OCI-LY7 (cell line): ENCODE measurements at regions of chrX and their contacts with region 1.

Region 1: GRCh38 chrX:129982274-129983251 is at the start of gene BCORL1:
- DNase-seq: peak; percentile 88
- H3K4me3 ChIP-seq: no peak within 1 kb of the TSS
- H3K27ac ChIP-seq: no peak within 1 kb of the TSS
- H3K4me1 ChIP-seq: peaks cover 13% of the 10 kb centered on the region
- CTCF ChIP-seq: no peak
- total RNA-seq, gene BCORL1: 1.6 and 1.7 TPM in 2 replicates

Region 2: DNA sequence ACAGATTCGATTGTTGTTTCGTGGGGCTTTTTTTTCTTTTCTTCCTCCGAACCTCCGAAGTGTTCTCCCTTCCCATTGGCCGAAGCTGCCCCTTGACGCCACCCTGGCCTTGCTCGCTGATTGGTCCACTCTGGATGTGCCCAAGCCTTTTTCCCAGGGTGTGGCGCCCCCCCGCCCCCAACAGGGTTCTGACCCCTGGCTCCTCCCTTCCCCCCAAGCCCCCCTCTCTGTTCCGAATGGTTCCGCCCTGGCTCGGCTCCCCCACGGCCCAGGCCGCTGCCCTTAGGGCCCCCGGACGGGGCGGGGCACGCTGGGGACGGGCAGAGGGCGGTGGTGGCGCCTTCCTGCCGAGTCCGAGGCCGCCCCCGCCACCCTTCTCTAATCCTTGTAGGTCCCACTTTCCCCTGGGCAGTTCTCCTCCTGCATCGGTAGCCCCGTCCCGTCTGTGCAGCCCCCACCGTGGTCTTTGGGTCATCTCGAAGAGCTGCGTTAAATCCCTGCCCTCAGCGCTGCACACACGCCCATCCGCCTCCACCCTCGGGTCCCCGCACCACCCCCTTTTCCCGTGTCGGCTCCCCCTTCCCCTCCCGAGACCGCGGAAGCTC is 51.0 kb before region 1 on chrX:
- CTCF ChIA-PET with region 1: no interaction called
- POLR2A ChIA-PET with region 1: no interaction called
- intact Hi-C with region 1: loop called (anchors 2 kb)
- DNase-seq: peak; percentile 81
- H3K4me3 ChIP-seq: peak overlapping the region; percentile 73
- H3K27ac ChIP-seq: peak overlapping the region; percentile 26
- H3K4me1 ChIP-seq: peaks cover 5% of the 10 kb centered on the region
- CTCF ChIP-seq: no peak

Region 3: DNA sequence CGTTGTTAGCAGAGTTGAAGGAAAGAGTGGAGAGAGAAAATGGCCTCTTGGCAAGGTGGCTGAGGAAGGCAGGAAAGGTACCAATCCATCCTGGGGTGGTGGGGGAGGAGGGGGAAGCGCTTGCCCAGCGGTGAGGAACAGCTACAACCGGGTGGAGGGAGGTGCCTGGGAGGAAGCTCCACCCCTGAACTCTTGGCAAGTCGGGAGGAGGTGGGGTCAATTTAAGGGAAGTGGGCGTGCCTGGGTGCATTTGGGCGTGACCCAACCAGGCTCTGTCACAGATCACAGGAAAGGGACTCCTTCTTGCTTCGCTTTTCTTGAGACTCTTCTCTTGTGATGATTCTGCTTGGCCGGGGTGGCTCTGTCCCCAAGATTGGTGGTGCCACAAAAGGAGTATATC is 41.6 kb after region 1 on chrX:
- CTCF ChIA-PET with region 1: no interaction called
- POLR2A ChIA-PET with region 1: interaction called, 7 read pairs
- intact Hi-C with region 1: loop called (anchors 2 kb)
- DNase-seq: peak; percentile 91
- H3K4me3 ChIP-seq: peak overlapping the region; percentile 36
- H3K27ac ChIP-seq: no peak overlapping the region
- H3K4me1 ChIP-seq: peaks cover 13% of the 10 kb centered on the region
- CTCF ChIP-seq: no peak